Dorsolateral prefrontal cortex (tissue), 120 donors: ENCODE measurements at regions of chr11 and their contacts with region 1.

Region 1: GRCh38 chr11:130861902-130862860 is 54.1 kb downstream of the SNX19 start:
- DNase-seq: peak; percentile 87 to 95 (median 92)
- H3K4me3 ChIP-seq: peak overlapping the region in 57 of 59 donors; percentile 4 to 65 (median 45)
- H3K27ac ChIP-seq: peak overlapping the region in 12 of 59 donors; percentile 6 to 79 (median 41)
- H3K27me3 ChIP-seq: no peaks in the 10 kb centered on the region
- CTCF ChIP-seq: peak; percentile 97 to 100 (median 100)

Region 2: GRCh38 chr11:130580372-130580771 is 281.8 kb before region 1 on chr11:
- intact Hi-C with region 1: loop called (anchors 5 to 10 kb)
- DNase-seq: peak; percentile 47 to 83 (median 73)
- H3K4me3 ChIP-seq: no peak overlapping the region
- H3K27ac ChIP-seq: peak overlapping the region in 1 of 59 donors; percentile 6
- H3K27me3 ChIP-seq: peaks cover 0 to 28% (median 0%) of the 10 kb centered on the region in 45 donors
- CTCF ChIP-seq: peak in 8 of 56 donors; percentile 13 to 41 (median 28)

Region 3: GRCh38 chr11:130666781-130667251 is 195.4 kb before region 1 on chr11:
- intact Hi-C with region 1: loop called in 1 of 2 experiments (anchors 5 kb)
- DNase-seq: peak in 1 of 10 donors; percentile 12
- H3K4me3 ChIP-seq: no peak overlapping the region
- H3K27ac ChIP-seq: no peak overlapping the region
- H3K27me3 ChIP-seq: peaks cover 0 to 4% (median 0%) of the 10 kb centered on the region in 45 donors
- CTCF ChIP-seq: peak in 45 of 56 donors; percentile 14 to 69 (median 38)

Region 4: DNA sequence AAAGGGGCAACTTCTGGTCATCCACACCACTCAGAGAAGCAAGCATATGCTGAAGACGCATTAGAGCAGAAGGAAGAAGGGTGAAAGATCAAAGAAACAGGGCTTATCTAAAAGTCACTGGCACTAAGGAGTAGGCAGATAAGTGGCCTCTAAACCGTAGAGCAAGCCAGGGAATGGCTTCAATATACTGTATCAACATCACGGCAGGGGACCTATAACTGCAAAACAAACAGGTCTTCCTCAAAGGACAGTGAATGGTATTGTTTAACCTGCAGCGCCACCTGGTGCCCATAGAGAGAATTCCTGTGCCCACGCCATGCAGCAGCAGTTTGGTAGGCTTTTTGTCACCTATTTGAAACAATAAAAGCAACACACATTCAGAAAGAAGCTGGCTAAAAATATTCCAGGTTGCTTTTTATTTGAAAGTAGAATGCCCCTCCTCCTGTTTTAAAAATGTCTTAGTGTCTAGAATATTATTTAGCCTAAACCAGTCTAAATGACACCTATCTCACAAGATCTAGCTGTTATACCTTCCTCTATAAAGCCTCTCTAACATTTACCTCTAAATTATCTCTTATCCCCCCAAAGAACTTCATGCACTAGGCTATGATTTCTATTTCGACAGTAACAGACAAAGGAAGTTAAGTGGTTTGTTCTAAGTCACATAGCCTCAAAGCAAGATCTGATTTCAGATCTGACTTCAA is 32.3 kb after region 1 on chr11:
- intact Hi-C with region 1: loop called in 1 of 2 experiments (anchors 1 kb)
- DNase-seq: peak; percentile 65 to 89 (median 80)
- H3K4me3 ChIP-seq: peak overlapping the region in 8 of 59 donors; percentile 2 to 25 (median 12)
- H3K27ac ChIP-seq: peak overlapping the region in 57 of 59 donors; percentile 16 to 88 (median 70)
- H3K27me3 ChIP-seq: no peaks in the 10 kb centered on the region
- CTCF ChIP-seq: peak; percentile 79 to 98 (median 94)

Region 5: GRCh38 chr11:130979386-130979972 is 117.3 kb after region 1 on chr11:
- intact Hi-C with region 1: no loop called
- DNase-seq: no peak
- H3K4me3 ChIP-seq: no peak overlapping the region
- H3K27ac ChIP-seq: no peak overlapping the region
- H3K27me3 ChIP-seq: peaks cover 0 to 34% (median 5%) of the 10 kb centered on the region in 45 donors
- CTCF ChIP-seq: peak in 14 of 56 donors; percentile 5 to 27 (median 15)